PC-3 (cell line): ENCODE measurements at regions of chr10 and their contacts with region 1.

Region 1: GRCh38 chr10:12782537-12782936 is 219.0 kb downstream of the CCDC3 start:
- DNase-seq: peak; percentile 39
- ATAC-seq: no peak
- H3K4me3 ChIP-seq: no peak overlapping the region
- H3K27ac ChIP-seq: no peak overlapping the region
- H3K4me1 ChIP-seq: no peaks in the 10 kb centered on the region
- H3K27me3 ChIP-seq: no peaks in the 10 kb centered on the region
- CTCF ChIP-seq: peak; percentile 65

Region 2: GRCh38 chr10:12707461-12708185 is 74.9 kb before region 1 on chr10:
- CTCF ChIA-PET with region 1: no interaction called
- POLR2A ChIA-PET with region 1: no interaction called
- intact Hi-C with region 1: no loop called
- DNase-seq: peak; percentile 79
- ATAC-seq: peak; percentile 47
- H3K4me3 ChIP-seq: no peak overlapping the region
- H3K27ac ChIP-seq: peak overlapping the region; percentile 100
- H3K4me1 ChIP-seq: peaks cover 90% of the 10 kb centered on the region
- H3K27me3 ChIP-seq: no peaks in the 10 kb centered on the region
- CTCF ChIP-seq: peak; percentile 62

Region 3: DNA sequence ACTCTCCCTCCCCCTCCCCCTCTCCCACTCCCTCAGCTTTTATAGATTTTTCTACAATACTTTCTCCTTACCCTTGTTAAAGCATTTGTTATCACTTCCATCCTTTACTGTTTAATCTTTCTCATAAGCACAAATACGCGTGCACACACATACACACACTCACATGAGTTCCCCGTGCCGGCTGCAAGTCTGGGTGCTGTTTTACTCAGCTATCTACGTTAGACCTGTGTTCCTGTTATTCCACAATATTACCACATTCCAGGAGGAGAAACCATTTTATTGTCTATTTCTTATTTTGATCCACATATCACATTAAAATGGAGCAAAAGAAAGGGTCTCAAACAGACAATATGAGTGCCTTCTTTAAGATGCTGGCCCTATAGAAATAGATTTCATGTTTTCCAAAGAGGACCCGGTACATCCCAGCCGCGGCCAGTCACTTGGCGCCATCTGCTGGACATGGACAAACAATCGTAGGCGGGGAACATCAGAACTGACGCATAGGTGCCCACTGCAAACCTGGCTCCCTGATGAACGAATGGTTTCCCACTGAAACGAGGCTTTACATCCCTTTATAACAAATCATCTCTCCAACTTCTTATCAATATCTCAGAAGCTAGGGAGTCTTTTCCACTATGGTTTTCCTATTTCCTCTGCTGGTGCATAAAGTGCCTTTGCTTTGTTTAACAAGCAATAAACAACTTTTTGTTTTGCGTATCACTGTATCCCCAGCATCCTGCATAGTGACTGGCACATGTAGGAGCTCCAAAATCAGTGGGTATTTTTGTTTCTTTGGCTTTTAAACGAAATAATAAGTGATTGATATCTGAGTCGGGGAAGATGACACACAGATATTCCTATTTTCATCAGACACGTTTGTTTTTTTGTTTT is 292.3 kb after region 1 on chr10:
- CTCF ChIA-PET with region 1: no interaction called
- POLR2A ChIA-PET with region 1: no interaction called
- intact Hi-C with region 1: loop called (anchors 1 kb)
- DNase-seq: peak; percentile 59
- ATAC-seq: peak; percentile 94
- H3K4me3 ChIP-seq: no peak overlapping the region
- H3K27ac ChIP-seq: no peak overlapping the region
- H3K4me1 ChIP-seq: no peaks in the 10 kb centered on the region
- H3K27me3 ChIP-seq: no peaks in the 10 kb centered on the region
- CTCF ChIP-seq: peak; percentile 74